ENCODE measurements at regions of chr14 and their contacts with region 1.

Region 1: DNA sequence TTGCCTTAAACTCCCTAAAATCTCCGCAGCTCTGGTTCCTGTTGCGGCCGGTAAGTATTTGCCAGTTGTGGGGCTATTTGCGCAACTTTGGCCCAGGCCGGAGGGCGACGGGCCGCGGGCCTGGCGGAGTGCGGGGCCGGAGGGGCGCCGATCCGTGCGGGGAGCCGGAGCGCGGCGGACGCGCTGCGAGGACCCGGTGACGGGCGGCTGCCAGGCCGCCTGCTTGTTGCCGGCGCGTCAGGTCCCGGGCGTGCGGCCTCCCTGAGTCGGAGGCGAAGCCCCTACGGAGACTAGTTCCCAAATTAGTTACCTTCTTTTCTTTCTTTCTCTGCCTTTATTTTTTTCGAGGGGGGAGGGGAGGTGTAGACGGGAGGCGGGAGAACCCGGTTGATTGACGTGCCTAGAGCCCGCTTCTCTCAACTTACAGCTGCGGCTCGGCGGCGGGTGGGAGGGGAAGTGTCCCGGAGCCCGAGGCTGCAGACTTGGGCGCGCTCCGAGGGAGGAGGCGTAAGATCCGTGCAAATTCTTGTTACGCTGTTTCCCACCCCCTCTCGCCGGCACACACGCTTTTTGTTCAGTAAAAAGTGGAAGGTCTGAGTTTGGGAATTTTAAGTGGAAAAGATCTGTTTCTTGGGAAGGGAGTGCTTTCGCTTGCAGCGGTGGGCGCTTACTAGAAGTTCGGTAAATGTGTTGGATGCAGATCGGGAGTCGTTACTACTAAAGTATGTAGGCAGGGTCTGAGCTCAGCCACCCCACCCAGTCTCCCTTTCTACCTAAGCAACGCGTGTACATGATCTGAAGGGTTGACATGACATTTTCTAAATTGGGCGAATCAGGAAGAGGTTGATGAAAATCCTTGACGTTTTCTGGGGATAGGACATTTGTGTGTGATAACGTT is 576 bp downstream of the ZBTB1 start:
- DNase-seq: peak; percentile 94
- H3K4me3 ChIP-seq: peak overlapping the region; percentile 87
- H3K27ac ChIP-seq: peak overlapping the region; percentile 100
- H3K4me1 ChIP-seq: peaks cover 36% of the 10 kb centered on the region
- H3K27me3 ChIP-seq: no peaks in the 10 kb centered on the region
- CTCF ChIP-seq: no peak

Region 2: GRCh38 chr14:64324895-64325294 is 180.3 kb before region 1 on chr14:
- CTCF ChIA-PET with region 1: no interaction called
- POLR2A ChIA-PET with region 1: no interaction called
- intact Hi-C with region 1: no loop called
- DNase-seq: peak; percentile 63
- H3K4me3 ChIP-seq: no peak overlapping the region
- H3K27ac ChIP-seq: peak overlapping the region; percentile 27
- H3K4me1 ChIP-seq: peaks cover 9% of the 10 kb centered on the region
- H3K27me3 ChIP-seq: no peaks in the 10 kb centered on the region
- CTCF ChIP-seq: no peak

Region 3: GRCh38 chr14:64540208-64541157 is 35.3 kb after region 1 on chr14 and contains the start of gene HSPA2:
- CTCF ChIA-PET with region 1: no interaction called
- POLR2A ChIA-PET with region 1: interaction called, 3 read pairs
- intact Hi-C with region 1: loop called (anchors 1 kb)
- DNase-seq: peak; percentile 99
- H3K4me3 ChIP-seq: peak within 1 kb of the TSS; percentile 59
- H3K27ac ChIP-seq: peak within 1 kb of the TSS; percentile 76
- H3K4me1 ChIP-seq: no peaks in the 10 kb centered on the region
- H3K27me3 ChIP-seq: no peaks in the 10 kb centered on the region
- CTCF ChIP-seq: peak; percentile 86
- total RNA-seq, gene HSPA2: 13.8 and 14.3 TPM in 2 replicates

Measured in A673 (cell line).